BJ (cell line): ENCODE measurements at regions of chr10 and their contacts with region 1.

Region 1: GRCh38 chr10:48981310-48981907 is 41.8 kb upstream of the LRRC18 start:
- DNase-seq: no peak
- H3K4me3 ChIP-seq: no peak overlapping the region
- H3K27me3 ChIP-seq: peaks cover 7% of the 10 kb centered on the region
- CTCF ChIP-seq: peak; percentile 92

Region 2: GRCh38 chr10:48968036-48968435 is 13.4 kb before region 1 on chr10:
- CTCF ChIA-PET with region 1: no interaction called
- POLR2A ChIA-PET with region 1: no interaction called
- DNase-seq: no peak
- H3K4me3 ChIP-seq: no peak overlapping the region
- H3K27me3 ChIP-seq: no peaks in the 10 kb centered on the region; the same call in 1 of the 2 replicates
- CTCF ChIP-seq: no peak

Region 3: GRCh38 chr10:49009199-49009979 is 28.0 kb after region 1 on chr10:
- CTCF ChIA-PET with region 1: interaction called, 12 read pairs
- POLR2A ChIA-PET with region 1: no interaction called
- DNase-seq: no peak
- H3K4me3 ChIP-seq: no peak overlapping the region
- H3K27me3 ChIP-seq: peaks cover 6% of the 10 kb centered on the region
- CTCF ChIP-seq: no peak

Region 4: GRCh38 chr10:49177391-49178355 is 196.3 kb after region 1 on chr10:
- CTCF ChIA-PET with region 1: no interaction called
- POLR2A ChIA-PET with region 1: no interaction called
- DNase-seq: peak; percentile 48
- H3K4me3 ChIP-seq: no peak overlapping the region
- H3K27me3 ChIP-seq: no peaks in the 10 kb centered on the region; the same call in none of the 2 replicates
- CTCF ChIP-seq: no peak